ENCODE measurements at regions of chr15 and their contacts with region 1.

Region 1: DNA sequence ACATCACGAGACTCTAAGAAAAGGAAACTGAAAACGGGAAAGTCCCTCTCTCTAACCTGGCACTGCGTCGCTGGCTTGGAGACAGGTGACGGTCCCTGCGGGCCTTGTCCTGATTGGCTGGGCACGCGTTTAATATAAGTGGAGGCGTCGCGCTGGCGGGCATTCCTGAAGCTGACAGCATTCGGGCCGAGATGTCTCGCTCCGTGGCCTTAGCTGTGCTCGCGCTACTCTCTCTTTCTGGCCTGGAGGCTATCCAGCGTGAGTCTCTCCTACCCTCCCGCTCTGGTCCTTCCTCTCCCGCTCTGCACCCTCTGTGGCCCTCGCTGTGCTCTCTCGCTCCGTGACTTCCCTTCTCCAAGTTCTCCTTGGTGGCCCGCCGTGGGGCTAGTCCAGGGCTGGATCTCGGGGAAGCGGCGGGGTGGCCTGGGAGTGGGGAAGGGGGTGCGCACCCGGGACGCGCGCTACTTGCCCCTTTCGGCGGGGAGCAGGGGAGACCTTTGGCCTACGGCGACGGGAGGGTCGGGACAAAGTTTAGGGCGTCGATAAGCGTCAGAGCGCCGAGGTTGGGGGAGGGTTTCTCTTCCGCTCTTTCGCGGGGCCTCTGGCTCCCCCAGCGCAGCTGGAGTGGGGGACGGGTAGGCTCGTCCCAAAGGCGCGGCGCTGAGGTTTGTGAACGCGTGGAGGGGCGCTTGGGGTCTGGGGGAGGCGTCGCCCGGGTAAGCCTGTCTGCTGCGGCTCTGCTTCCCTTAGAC is at the start of gene B2M:
- DNase-seq: peak; percentile 98
- H3K4me3 ChIP-seq: peak within 1 kb of the TSS; percentile 79 to 96 (median 87)
- H3K27ac ChIP-seq: peak within 1 kb of the TSS; percentile 92
- H3K4me1 ChIP-seq: peaks cover 4% of the 10 kb centered on the region
- H3K27me3 ChIP-seq: no peaks in the 10 kb centered on the region
- CTCF ChIP-seq: no peak
- POLR2A ChIP-seq: peak; percentile 100
- total RNA-seq, gene B2M: 725 and 985 TPM in 2 replicates

Region 2: DNA sequence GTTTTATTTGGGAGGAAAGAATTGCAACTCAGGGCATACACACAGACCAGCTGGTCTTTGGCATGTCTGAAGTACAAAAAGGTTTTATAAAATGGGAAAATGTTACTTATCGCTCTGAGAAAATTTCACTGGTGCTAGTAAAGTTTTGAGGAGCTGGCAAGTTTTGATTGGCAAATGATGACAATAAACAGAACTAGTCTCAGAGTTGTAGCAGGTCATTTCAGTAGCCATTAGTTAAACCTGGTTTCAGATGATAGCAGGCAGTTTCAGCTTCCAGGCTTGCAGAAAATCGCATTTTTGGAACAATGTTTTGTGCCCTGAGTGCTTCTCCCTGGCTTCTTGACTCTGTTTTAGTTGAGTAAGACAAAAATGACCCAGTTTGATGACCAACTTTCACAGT is 10.5 kb after region 1 on chr15:
- CTCF ChIA-PET with region 1: interaction called, 65 read pairs
- POLR2A ChIA-PET with region 1: interaction called, 63 read pairs
- dilution Hi-C with region 1: no loop called
- intact Hi-C with region 1: loop called (anchors 1 kb)
- DNase-seq: no peak
- H3K4me3 ChIP-seq: no peak overlapping the region
- H3K27ac ChIP-seq: no peak overlapping the region
- H3K4me1 ChIP-seq: peaks cover 12% of the 10 kb centered on the region
- H3K27me3 ChIP-seq: no peaks in the 10 kb centered on the region
- CTCF ChIP-seq: no peak
- POLR2A ChIP-seq: no peak

Region 3: DNA sequence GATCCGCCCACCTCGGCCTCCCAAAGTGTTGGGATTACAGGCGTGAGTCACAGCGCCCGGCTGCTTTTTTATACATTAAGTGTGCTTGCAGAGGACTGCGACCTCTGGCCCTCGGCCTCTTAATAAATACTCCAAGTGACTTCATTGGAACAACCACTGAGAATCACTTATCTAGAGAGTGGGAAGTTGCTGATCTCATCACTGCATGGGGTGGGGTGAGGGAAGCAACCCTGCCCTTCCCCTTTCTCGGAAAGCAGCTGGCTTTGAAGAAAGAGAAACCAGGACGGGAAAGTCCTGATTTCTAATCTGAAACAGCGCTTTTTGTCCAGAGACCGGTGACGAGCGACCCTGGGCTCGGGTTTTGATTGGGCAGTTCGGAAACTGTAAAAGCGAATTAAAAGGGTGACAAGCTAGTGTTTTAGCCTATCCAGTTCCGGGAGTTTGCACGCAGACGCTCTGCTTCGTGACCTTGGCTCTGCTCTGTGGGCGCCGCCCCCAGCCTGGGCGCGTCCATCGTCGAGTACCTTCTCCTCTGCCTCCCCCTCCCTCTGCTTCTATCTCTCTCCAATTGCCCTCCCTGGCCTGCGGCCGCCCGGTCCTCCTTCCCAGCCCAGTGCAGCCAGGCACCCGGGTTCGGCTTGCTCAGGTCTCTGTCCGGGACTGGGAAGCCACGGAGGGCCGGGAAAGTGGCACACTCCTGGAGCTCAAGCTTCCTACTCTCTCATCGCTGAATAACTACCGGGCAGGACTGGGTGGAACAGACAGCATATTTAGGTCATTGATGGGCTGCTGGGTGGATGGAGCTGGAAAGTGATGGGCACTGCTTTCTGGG is 17.3 kb after region 1 on chr15:
- CTCF ChIA-PET with region 1: interaction called, 65 read pairs
- POLR2A ChIA-PET with region 1: interaction called, 63 read pairs
- dilution Hi-C with region 1: no loop called
- intact Hi-C with region 1: loop called (anchors 1 kb)
- DNase-seq: peak; percentile 99
- H3K4me3 ChIP-seq: peak overlapping the region; percentile 60 to 75 (median 69)
- H3K27ac ChIP-seq: peak overlapping the region; percentile 71
- H3K4me1 ChIP-seq: peaks cover 32% of the 10 kb centered on the region
- H3K27me3 ChIP-seq: no peaks in the 10 kb centered on the region
- CTCF ChIP-seq: no peak
- POLR2A ChIP-seq: peak; percentile 71

Region 4: GRCh38 chr15:44918136-44918535 is 206.6 kb after region 1 on chr15:
- CTCF ChIA-PET with region 1: no interaction called
- POLR2A ChIA-PET with region 1: no interaction called
- dilution Hi-C with region 1: no loop called
- intact Hi-C with region 1: loop called (anchors 10 kb)
- DNase-seq: no peak
- H3K4me3 ChIP-seq: no peak overlapping the region
- H3K27ac ChIP-seq: no peak overlapping the region
- H3K4me1 ChIP-seq: no peaks in the 10 kb centered on the region
- H3K27me3 ChIP-seq: no peaks in the 10 kb centered on the region
- CTCF ChIP-seq: no peak
- POLR2A ChIP-seq: no peak

Region 5: DNA sequence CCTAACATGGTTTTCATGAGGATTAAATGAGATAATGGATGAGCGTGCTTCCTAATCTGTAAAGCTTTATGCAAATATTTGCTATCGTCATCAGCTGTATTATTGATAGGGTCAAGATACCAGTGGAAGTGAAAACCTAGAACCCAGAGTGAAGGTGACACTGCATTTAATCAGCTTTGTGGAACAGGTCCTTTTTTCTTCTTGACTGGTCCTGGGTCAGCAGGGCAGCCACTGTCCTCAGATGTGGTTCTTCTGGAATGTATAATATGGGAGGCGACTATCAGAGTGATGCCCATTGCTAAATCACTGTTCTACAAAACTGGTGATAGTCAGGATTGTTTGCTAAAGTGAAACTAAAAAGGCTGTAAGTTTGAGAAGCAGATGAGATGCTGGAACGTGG is 352.9 kb after region 1 on chr15:
- CTCF ChIA-PET with region 1: no interaction called
- POLR2A ChIA-PET with region 1: no interaction called
- dilution Hi-C with region 1: no loop called
- intact Hi-C with region 1: no loop called
- DNase-seq: no peak
- H3K4me3 ChIP-seq: no peak overlapping the region
- H3K27ac ChIP-seq: no peak overlapping the region
- H3K4me1 ChIP-seq: peaks cover 3% of the 10 kb centered on the region
- H3K27me3 ChIP-seq: no peaks in the 10 kb centered on the region
- CTCF ChIP-seq: no peak
- POLR2A ChIP-seq: no peak